Spleen (tissue), 13 donors: ENCODE measurements at regions of chr7 and their contacts with region 1.

Region 1: GRCh38 chr7:100132697-100133151 is 6.0 kb downstream of the MBLAC1 start:
- DNase-seq: peak; percentile 88
- H3K4me3 ChIP-seq: no peak overlapping the region
- H3K27ac ChIP-seq: no peak overlapping the region
- H3K4me1 ChIP-seq: peaks cover 13 to 36% (median 21%) of the 10 kb centered on the region in 6 donors
- H3K27me3 ChIP-seq: no peaks in the 10 kb centered on the region
- CTCF ChIP-seq: peak; percentile 75 to 96 (median 92)
- POLR2A ChIP-seq: no peak

Region 2: GRCh38 chr7:98956937-98957336 is 1175.8 kb before region 1 on chr7:
- intact Hi-C with region 1: no loop called
- DNase-seq: no peak
- H3K4me3 ChIP-seq: no peak overlapping the region
- H3K27ac ChIP-seq: no peak overlapping the region
- H3K4me1 ChIP-seq: no peaks in the 10 kb centered on the region
- H3K27me3 ChIP-seq: no peaks in the 10 kb centered on the region
- CTCF ChIP-seq: no peak
- POLR2A ChIP-seq: no peak

Region 3: GRCh38 chr7:100221231-100221718 is 88.6 kb after region 1 on chr7:
- intact Hi-C with region 1: loop called (anchors 10 kb)
- DNase-seq: peak; percentile 93
- H3K4me3 ChIP-seq: peak overlapping the region in 7 of 8 donors; percentile 40 to 81 (median 45)
- H3K27ac ChIP-seq: peak overlapping the region; percentile 88 to 100 (median 92)
- H3K4me1 ChIP-seq: peaks cover 0 to 83% (median 21%) of the 10 kb centered on the region in 6 donors
- H3K27me3 ChIP-seq: no peaks in the 10 kb centered on the region
- CTCF ChIP-seq: peak in 1 of 11 experiments; percentile 4
- POLR2A ChIP-seq: peak in 2 of 3 donors; percentile 32 to 34

Region 4: DNA sequence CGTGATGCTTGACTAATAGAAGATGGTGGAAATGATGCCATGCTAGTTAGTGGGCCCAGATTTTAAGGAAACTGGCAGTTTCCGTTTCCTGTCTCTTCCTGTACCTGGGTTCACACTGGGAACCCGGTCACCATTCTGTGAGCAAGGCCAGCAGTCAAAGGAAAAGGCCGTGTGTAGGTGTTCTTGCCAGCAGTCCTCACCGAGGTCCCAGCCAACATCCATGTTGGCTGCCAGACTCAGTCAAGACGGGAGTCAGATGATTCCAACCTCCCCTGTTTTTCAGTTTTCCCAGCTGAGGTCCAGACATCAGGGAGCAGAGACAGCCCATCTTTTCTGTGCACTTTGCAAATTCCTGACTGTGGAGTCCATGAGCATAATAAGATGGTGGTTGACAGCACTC is 210.0 kb after region 1 on chr7:
- intact Hi-C with region 1: loop called (anchors 10 kb)
- DNase-seq: peak; percentile 44
- H3K4me3 ChIP-seq: no peak overlapping the region
- H3K27ac ChIP-seq: peak overlapping the region in 2 of 8 donors; percentile 37 to 38
- H3K4me1 ChIP-seq: peaks cover 4 to 56% (median 20%) of the 10 kb centered on the region in 6 donors
- H3K27me3 ChIP-seq: no peaks in the 10 kb centered on the region
- CTCF ChIP-seq: no peak
- POLR2A ChIP-seq: no peak